WTC11 (cell line): ENCODE measurements at regions of chr1 and their contacts with region 1.

Region 1: DNA sequence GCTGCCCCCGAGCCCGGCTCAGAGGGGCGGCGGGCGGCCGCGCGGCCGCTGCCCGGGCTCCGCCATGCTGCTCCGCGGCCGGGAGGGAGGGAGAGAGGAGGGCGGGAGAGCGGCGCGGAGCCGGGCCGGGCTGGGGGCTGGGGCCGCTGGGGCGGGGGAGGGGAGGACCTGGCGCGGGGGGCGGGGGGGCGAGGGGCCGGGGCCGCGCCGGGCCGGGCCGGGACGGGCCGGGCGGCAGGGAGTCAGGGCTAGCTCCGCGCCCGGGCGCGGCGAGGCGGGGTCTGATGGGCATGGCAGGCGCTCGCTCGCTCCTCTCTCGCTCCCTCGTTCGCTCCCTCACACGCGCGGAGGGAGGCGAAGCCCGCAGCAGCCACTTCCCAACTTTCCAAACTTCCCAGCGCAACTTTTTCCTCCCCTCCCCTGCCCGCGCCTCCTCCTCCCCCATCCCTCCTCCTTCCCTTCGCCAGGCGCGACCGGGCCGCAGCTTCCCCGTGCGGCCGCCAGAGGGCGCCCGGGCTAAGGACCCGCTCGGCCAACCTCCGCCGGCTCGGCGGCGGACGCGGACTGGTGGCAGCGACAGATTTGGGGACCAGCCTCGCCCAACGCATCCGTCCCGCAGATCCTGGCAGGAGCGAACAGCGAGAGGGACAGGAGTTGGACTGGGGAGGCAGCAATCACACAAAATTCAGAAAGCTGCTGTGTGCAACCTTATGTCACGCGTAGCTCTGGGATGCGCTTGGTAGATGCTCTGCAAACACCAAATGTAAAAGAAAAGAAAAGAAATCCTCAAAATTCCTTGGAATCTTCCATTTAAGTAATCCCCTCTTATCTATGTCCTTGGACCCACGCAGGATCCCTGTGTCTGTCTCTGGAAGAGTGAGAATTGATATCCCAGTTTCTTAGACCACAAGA is at the start of gene TRABD2B:
- DNase-seq: peak; percentile 91
- ATAC-seq: peak; percentile 72
- H3K4me3 Mint-ChIP-seq: peak within 1 kb of the TSS; percentile 88
- H3K27ac Mint-ChIP-seq: peak within 1 kb of the TSS; percentile 50
- H3K4me1 Mint-ChIP-seq: peaks cover 58% of the 10 kb centered on the region
- H3K27me3 Mint-ChIP-seq: peaks cover 32% of the 10 kb centered on the region
- CTCF ChIP-seq: peak; percentile 96
- total RNA-seq, gene TRABD2B: 7.8 to 10.8 TPM (median 10.3 TPM) in 3 replicates

Region 2: DNA sequence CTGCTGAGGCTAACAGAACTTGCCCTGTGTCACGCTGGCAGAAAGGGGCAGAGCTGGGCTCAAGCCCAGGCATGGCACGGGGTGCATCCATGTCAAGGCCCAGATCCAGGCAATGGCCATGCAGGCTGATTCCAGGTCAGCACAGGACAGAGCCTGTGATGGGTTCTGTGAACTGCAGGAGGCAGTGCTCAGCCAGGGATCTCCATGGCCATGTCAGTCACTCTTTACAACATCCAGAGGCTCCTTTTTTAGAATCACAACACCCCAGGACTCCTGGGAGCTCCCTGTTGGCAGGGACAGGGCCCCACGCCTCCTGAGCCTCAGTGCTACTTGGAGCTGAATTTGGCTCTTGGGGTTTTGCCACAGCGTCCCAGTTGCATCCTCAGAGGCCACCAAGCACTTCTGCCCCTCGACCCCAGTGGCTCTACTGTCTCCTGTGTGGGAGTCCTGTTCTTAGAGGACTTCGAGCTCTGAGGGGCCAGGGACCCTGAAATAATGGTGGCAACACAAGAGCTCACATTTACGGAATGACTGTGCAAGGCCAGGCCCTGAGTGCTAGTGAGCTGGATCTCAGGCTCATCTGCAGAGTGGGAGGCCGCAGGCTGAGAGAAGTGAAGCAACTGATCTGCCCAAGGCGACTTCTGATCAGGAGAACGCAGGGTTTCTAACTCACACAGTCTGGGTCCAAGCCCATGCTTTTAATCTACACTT is 211.8 kb before region 1 on chr1:
- CTCF ChIA-PET with region 1: interaction called, 13 read pairs
- POLR2A ChIA-PET with region 1: no interaction called
- DNase-seq: peak; percentile 43
- ATAC-seq: peak; percentile 94
- H3K4me3 Mint-ChIP-seq: no peak overlapping the region
- H3K27ac Mint-ChIP-seq: no peak overlapping the region
- H3K4me1 Mint-ChIP-seq: no peaks in the 10 kb centered on the region
- H3K27me3 Mint-ChIP-seq: no peaks in the 10 kb centered on the region; the same call in 1 of the 2 replicates
- CTCF ChIP-seq: no peak

Region 3: DNA sequence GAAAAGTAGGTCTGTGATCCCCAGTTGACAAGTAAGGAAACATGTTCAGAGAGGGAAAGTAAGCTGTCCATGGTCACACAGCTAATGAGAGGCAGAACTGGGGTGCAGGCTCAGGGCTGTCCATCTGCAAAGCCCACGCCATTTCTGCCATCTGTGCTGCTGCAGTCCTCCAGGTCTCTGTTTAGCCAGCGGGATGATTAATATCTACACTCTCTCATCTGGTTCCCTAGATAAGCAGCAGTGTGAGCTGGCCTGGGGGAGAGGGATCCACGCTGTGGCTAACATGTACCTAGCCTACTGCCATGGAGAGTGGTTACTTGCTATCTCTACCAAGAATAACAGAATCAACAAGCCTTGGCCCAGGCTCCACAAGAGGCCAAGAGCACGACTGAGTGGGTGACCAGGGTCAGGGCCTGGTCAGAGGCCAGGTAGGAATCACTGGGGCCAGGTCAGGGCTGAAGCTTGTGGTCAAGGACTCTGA is 75.6 kb before region 1 on chr1:
- CTCF ChIA-PET with region 1: no interaction called
- POLR2A ChIA-PET with region 1: no interaction called
- DNase-seq: no peak
- ATAC-seq: no peak
- H3K4me3 Mint-ChIP-seq: no peak overlapping the region
- H3K27ac Mint-ChIP-seq: no peak overlapping the region
- H3K4me1 Mint-ChIP-seq: peaks cover 8% of the 10 kb centered on the region
- H3K27me3 Mint-ChIP-seq: no peaks in the 10 kb centered on the region
- CTCF ChIP-seq: no peak

Region 4: DNA sequence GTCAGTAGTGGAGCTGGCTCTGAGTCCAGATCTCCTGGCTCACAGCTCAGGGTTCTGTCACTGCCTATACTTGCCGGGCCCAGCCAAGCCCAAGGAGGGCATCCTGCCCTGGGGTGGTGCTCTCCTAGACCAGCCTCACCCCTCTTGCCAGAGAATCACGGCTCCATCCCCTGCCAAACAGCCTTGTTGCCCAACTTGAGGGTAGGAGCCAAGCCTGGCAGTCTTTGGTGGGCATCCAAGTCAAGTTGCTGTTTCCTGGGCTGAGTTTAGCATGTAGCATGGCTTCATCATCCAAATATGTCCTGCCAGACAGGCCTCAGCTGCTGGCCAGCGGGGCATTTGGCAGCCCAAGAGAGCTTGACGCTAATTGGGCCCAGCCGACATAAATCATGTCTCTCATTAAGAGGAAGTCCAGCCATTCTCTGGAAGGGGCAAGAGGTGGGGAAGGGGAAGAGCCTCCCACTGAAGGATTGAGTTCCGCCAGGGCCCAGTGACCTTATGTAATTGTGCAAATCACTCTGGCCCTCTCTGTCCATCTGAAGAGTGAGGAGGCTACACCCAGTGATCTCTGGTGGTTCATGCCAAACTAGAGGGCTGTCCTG is 22.3 kb after region 1 on chr1:
- CTCF ChIA-PET with region 1: interaction called, 20 read pairs
- POLR2A ChIA-PET with region 1: no interaction called
- DNase-seq: no peak
- ATAC-seq: no peak
- H3K4me3 Mint-ChIP-seq: no peak overlapping the region
- H3K27ac Mint-ChIP-seq: no peak overlapping the region
- H3K4me1 Mint-ChIP-seq: peaks cover 20% of the 10 kb centered on the region
- H3K27me3 Mint-ChIP-seq: peaks cover 22% of the 10 kb centered on the region
- CTCF ChIP-seq: no peak

Region 5: GRCh38 chr1:48048064-48048463 is 50.5 kb after region 1 on chr1:
- CTCF ChIA-PET with region 1: interaction called, 25 read pairs
- POLR2A ChIA-PET with region 1: no interaction called
- DNase-seq: no peak
- ATAC-seq: no peak
- H3K4me3 Mint-ChIP-seq: no peak overlapping the region
- H3K27ac Mint-ChIP-seq: no peak overlapping the region
- H3K4me1 Mint-ChIP-seq: peaks cover 17% of the 10 kb centered on the region
- H3K27me3 Mint-ChIP-seq: peaks cover 37% of the 10 kb centered on the region
- CTCF ChIP-seq: no peak

Region 6: DNA sequence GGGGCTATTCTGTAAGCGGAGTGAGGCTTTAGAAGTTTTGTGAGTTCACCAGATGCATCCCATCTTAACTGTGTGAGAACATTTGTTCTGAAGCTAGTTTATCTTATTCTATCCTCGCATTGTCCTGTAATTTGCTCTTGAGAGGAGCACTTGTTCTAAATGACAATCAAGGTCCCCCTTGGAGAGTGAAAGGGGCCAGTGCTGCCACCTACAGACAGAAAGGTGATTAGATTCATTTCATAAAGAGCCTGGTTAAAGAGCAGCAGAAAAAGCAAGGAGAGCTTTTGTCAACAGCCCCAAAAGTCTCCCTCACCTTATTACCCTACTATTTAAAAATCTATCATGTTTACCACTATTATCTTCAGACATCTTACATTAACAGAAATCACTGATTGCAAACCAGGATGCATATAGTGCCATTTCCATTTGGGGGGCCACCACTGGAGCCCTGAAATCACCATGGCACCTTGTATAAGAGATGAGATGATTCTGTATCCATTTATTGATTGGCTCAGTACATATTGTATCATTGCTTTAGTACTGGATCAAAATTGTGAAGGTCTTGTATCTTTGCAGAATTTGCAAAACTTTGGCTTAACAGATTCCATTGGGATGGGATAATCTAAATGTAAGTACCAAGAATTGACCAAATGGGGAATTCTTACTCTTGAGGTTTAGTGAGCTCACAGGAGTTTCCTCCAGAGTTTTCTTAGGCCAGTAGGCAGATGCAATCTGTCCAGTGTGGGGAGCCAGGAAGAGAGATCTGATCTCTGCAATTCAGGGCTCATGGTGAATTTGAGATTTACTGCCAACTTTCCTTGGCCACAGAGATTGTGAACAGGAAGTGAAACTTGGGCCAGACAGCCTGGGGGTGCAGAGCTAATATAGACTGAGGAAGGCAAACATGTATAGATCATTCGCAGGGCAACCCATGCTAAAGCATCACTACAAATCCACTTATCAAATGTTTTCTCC is 63.9 kb after region 1 on chr1:
- CTCF ChIA-PET with region 1: interaction called, 78 read pairs
- POLR2A ChIA-PET with region 1: no interaction called
- DNase-seq: peak; percentile 72
- ATAC-seq: peak; percentile 85
- H3K4me3 Mint-ChIP-seq: no peak overlapping the region
- H3K27ac Mint-ChIP-seq: no peak overlapping the region
- H3K4me1 Mint-ChIP-seq: peaks cover 8% of the 10 kb centered on the region
- H3K27me3 Mint-ChIP-seq: peaks cover 26% of the 10 kb centered on the region
- CTCF ChIP-seq: peak; percentile 57

Region 7: GRCh38 chr1:48109390-48110013 is 112.0 kb after region 1 on chr1:
- CTCF ChIA-PET with region 1: interaction called, 10 read pairs
- POLR2A ChIA-PET with region 1: no interaction called
- DNase-seq: no peak
- ATAC-seq: peak; percentile 87
- H3K4me3 Mint-ChIP-seq: no peak overlapping the region
- H3K27ac Mint-ChIP-seq: no peak overlapping the region
- H3K4me1 Mint-ChIP-seq: peaks cover 22% of the 10 kb centered on the region
- H3K27me3 Mint-ChIP-seq: no peaks in the 10 kb centered on the region
- CTCF ChIP-seq: peak; percentile 53; the same call in 1 of the 2 replicates

Region 8: GRCh38 chr1:48164571-48164970 is 167.0 kb after region 1 on chr1:
- CTCF ChIA-PET with region 1: no interaction called
- POLR2A ChIA-PET with region 1: no interaction called
- DNase-seq: no peak
- ATAC-seq: no peak
- H3K4me3 Mint-ChIP-seq: no peak overlapping the region
- H3K27ac Mint-ChIP-seq: no peak overlapping the region
- H3K4me1 Mint-ChIP-seq: peaks cover 5% of the 10 kb centered on the region
- H3K27me3 Mint-ChIP-seq: peaks cover 2% of the 10 kb centered on the region
- CTCF ChIP-seq: no peak

Region 9: GRCh38 chr1:48263041-48263440 is 265.5 kb after region 1 on chr1:
- CTCF ChIA-PET with region 1: no interaction called
- POLR2A ChIA-PET with region 1: no interaction called
- DNase-seq: no peak
- ATAC-seq: no peak
- H3K4me3 Mint-ChIP-seq: no peak overlapping the region
- H3K27ac Mint-ChIP-seq: no peak overlapping the region
- H3K4me1 Mint-ChIP-seq: no peaks in the 10 kb centered on the region
- H3K27me3 Mint-ChIP-seq: no peaks in the 10 kb centered on the region
- CTCF ChIP-seq: no peak